ENCODE measurements at regions of chr3 and their contacts with region 1.

Region 1: DNA sequence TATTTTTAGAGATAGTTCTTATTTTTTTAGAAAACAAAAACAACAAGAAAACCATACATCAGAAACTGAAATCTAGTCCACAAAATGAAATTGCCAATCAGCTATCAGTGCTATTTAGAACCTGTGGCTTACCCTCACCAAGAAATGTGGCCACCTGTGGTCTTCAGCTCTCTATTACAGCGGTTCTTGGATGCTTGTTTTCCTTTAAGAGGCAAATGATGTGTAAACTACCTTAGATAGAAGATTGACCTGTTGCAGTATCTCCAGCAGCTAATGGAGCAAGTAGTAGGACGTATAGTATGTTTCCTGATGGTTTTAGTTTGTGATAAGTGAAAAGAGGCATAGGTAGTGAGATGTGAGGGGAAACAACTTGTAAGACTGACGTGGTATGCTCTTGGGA is 21.2 kb downstream of the TFG start:
- DNase-seq: no peak
- ATAC-seq: no peak
- H3K4me3 Mint-ChIP-seq: no peak overlapping the region
- H3K27ac Mint-ChIP-seq: no peak overlapping the region
- H3K4me1 Mint-ChIP-seq: peaks cover 3% of the 10 kb centered on the region
- H3K27me3 Mint-ChIP-seq: no peaks in the 10 kb centered on the region
- CTCF ChIP-seq: no peak

Region 2: GRCh38 chr3:100715176-100715575 is 15.3 kb before region 1 on chr3:
- CTCF ChIA-PET with region 1: no interaction called
- POLR2A ChIA-PET with region 1: no interaction called
- intact Hi-C with region 1: loop called (anchors 2 kb)
- DNase-seq: no peak
- ATAC-seq: no peak
- H3K4me3 Mint-ChIP-seq: no peak overlapping the region
- H3K27ac Mint-ChIP-seq: no peak overlapping the region
- H3K4me1 Mint-ChIP-seq: peaks cover 49% of the 10 kb centered on the region
- H3K27me3 Mint-ChIP-seq: no peaks in the 10 kb centered on the region
- CTCF ChIP-seq: no peak

Measured in activated B cell treated with CpG ODN at 0.5 μM for 24 hours (primary cell).